ENCODE measurements at regions of chr17 and their contacts with region 1.

Region 1: GRCh38 chr17:69523244-69523861 is 108.9 kb downstream of the MAP2K6 start:
- DNase-seq: peak; percentile 76
- ATAC-seq: peak; percentile 90
- H3K4me3 ChIP-seq: peak overlapping the region; percentile 53
- H3K27ac ChIP-seq: no peak overlapping the region
- H3K4me1 ChIP-seq: 0 out of 2 replicates have a peak, but pooled peaks cover 3% of the 10 kb centered on the region
- H3K27me3 ChIP-seq: no peaks in the 10 kb centered on the region
- CTCF ChIP-seq: peak; percentile 95

Region 2: DNA sequence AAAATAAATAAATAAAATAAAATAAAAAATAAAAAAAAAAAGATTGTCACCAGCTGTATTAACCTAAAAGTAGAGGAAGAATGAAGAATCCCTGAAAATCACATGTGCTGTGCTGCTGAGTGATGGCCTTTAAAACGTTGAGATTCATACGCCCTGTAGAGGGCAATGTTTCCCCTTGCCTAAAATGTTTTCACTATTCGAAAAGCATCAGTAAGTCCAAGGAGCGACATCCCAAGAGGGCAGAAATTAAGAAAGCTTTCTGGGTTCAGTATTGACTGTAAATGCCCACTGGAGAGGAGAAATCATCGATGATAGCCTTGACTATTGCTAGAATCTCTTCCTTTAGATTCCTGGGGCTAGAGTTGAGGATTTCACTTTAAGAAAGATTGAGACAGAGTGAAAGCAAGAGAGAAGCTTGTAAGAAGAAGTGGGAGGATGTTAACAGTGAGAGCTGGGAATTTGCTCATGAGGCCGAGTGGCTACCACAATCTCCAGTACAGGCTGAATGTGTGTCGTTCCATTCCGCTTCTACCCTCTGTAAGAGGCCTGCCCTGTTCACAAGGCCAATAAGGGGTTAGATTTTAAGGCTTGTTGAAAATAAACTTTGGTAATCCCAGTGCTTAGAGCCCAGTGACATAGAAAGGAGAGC is 751.4 kb before region 1 on chr17:
- CTCF ChIA-PET with region 1: interaction called, 4 read pairs
- POLR2A ChIA-PET with region 1: no interaction called
- intact Hi-C with region 1: loop called (anchors 5 kb)
- DNase-seq: peak; percentile 81
- ATAC-seq: peak; percentile 69
- H3K4me3 ChIP-seq: peak overlapping the region; percentile 65
- H3K27ac ChIP-seq: no peak overlapping the region
- H3K4me1 ChIP-seq: peaks cover 13% of the 10 kb centered on the region
- H3K27me3 ChIP-seq: no peaks in the 10 kb centered on the region
- CTCF ChIP-seq: peak; percentile 88

Region 3: GRCh38 chr17:69213059-69213813 is 310.1 kb before region 1 on chr17:
- CTCF ChIA-PET with region 1: no interaction called
- POLR2A ChIA-PET with region 1: no interaction called
- intact Hi-C with region 1: no loop called
- DNase-seq: no peak
- ATAC-seq: no peak
- H3K4me3 ChIP-seq: no peak overlapping the region
- H3K27ac ChIP-seq: no peak overlapping the region
- H3K4me1 ChIP-seq: no peaks in the 10 kb centered on the region
- H3K27me3 ChIP-seq: no peaks in the 10 kb centered on the region
- CTCF ChIP-seq: peak; percentile 40; the same call in 1 of the 2 replicates

Region 4: DNA sequence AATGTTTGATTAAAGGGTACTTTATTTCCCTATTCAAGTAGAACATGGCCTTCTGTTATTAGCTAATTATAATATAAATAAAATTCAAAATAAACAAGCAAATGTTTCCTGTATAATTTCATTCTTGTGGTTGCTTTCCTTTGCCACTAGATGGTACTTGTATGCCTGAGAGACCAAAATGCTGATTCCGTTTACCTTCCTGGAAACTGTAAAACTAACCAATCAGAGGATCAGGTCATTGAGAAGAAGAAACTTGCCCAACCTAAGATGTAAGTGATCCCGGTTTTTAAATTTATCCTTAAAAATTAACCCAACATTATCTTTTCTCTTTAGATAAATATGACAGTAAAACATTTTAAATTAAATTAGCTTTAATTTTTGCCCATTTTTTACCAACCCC is 188.3 kb before region 1 on chr17:
- CTCF ChIA-PET with region 1: interaction called, 10 read pairs
- POLR2A ChIA-PET with region 1: interaction called, 11 read pairs
- intact Hi-C with region 1: loop called (anchors 1 kb)
- DNase-seq: peak; percentile 79
- ATAC-seq: peak; percentile 77
- H3K4me3 ChIP-seq: 0 out of 2 replicates have a peak overlapping the region, but pooled peaks have one; percentile 0
- H3K27ac ChIP-seq: no peak overlapping the region
- H3K4me1 ChIP-seq: no peaks in the 10 kb centered on the region
- H3K27me3 ChIP-seq: no peaks in the 10 kb centered on the region
- CTCF ChIP-seq: peak; percentile 83

Region 5: DNA sequence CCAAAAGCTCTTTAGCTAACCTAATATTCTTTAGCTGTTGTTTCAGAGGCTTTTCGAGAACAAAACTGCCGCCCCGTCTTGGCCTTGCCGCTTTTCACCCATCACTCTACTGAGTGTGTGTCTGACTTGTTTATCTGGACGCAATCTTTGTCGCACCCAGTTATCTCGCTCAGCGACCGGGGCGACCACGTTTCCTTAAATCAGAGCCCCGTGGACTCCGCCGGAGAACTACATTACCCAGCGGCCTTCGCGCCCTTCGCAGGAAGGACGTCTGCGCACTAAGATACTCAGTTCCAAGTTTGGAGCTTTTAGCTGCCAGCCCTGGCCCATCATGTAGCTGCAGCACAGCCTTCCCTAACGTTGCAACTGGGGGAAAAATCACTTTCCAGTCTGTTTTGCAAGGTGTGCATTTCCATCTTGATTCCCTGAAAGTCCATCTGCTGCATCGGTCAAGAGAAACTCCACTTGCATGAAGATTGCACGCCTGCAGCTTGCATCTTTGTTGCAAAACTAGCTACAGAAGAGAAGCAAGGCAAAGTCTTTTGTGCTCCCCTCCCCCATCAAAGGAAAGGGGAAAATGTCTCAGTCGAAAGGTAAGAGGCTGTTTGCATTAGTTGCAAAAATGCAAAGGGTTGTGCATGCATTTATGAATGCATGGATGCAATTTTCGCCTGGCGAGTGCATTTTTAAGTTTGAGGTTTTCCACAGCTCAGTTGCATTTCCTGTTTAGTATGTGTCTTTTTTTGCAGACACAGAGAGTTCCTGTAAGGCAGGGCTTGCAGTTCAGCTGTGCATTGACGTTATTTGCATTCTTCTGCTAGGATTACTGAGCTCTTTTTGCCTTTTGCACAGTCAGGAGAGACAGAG is 108.7 kb before region 1 on chr17 and contains the start of gene MAP2K6:
- CTCF ChIA-PET with region 1: interaction called, 8 read pairs
- POLR2A ChIA-PET with region 1: interaction called, 3 read pairs
- intact Hi-C with region 1: loop called (anchors 2 kb)
- DNase-seq: peak; percentile 90
- ATAC-seq: peak; percentile 92
- H3K4me3 ChIP-seq: peak within 1 kb of the TSS; percentile 72
- H3K27ac ChIP-seq: peak within 1 kb of the TSS; percentile 29
- H3K4me1 ChIP-seq: peaks cover 36% of the 10 kb centered on the region
- H3K27me3 ChIP-seq: no peaks in the 10 kb centered on the region
- CTCF ChIP-seq: no peak
- total RNA-seq, gene MAP2K6: 8.4 and 12.2 TPM in 2 replicates

Region 6: DNA sequence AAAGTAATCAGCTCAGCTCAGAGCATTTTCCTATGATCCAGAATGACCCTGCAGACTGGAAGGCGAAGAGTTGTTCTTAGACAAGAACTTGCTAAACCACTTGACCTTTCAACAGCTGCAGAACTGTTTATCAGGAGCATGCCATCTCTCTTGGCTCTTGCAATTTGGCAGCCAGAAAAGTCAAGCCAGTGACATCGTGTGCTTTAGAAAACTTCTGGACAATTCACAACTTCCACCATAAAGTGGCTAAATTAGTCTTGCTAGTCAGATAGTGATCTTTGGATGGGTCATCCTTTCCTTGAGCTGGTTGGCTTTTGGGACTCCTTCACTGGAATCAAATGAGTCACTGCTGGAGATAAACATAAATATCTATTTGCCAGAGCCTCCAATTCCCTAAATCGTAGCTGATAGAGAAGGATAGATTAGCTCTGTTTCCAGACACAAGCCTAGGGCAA is 37.7 kb after region 1 on chr17:
- CTCF ChIA-PET with region 1: no interaction called
- POLR2A ChIA-PET with region 1: no interaction called
- intact Hi-C with region 1: loop called (anchors 2 kb)
- DNase-seq: peak; percentile 74
- ATAC-seq: peak; percentile 76
- H3K4me3 ChIP-seq: no peak overlapping the region
- H3K27ac ChIP-seq: peak overlapping the region; percentile 67
- H3K4me1 ChIP-seq: peaks cover 30% of the 10 kb centered on the region
- H3K27me3 ChIP-seq: no peaks in the 10 kb centered on the region
- CTCF ChIP-seq: no peak

Region 7: DNA sequence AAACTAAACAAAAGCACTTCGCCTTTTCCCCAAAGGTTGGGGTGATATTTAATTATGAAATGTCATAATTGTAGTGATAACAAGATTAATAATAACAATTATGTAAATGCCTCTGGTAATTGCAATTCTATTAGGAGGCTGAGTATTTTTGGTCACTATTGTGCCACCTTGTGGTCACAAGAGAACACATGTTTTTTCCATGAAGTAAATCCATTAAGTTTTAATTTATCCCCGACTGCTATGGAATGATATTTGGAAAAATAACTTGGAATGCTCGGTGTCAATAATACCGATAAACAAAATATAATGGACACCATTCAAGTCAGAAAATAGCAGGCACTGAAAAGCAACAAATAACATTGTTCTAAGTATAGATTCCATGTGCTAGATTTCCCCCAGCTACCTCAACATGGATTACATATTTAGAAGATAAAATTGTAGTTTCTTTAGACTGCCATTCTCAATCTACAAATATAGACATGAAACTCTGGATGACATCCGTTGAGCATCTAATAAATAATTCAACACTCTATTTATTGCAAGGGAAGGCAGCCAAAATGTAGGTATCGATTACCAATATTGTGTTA is 621.0 kb after region 1 on chr17:
- CTCF ChIA-PET with region 1: interaction called, 3 read pairs
- POLR2A ChIA-PET with region 1: no interaction called
- intact Hi-C with region 1: loop called (anchors 1 kb)
- DNase-seq: peak; percentile 56
- ATAC-seq: no peak; the same call in 1 of the 2 replicates
- H3K4me3 ChIP-seq: no peak overlapping the region
- H3K27ac ChIP-seq: no peak overlapping the region
- H3K4me1 ChIP-seq: peaks cover 7% of the 10 kb centered on the region
- H3K27me3 ChIP-seq: no peaks in the 10 kb centered on the region
- CTCF ChIP-seq: peak; percentile 91

Region 8: GRCh38 chr17:70622368-70623260 is 1099.3 kb after region 1 on chr17:
- CTCF ChIA-PET with region 1: no interaction called
- POLR2A ChIA-PET with region 1: no interaction called
- intact Hi-C with region 1: loop called (anchors 1 kb)
- DNase-seq: peak; percentile 80
- ATAC-seq: peak; percentile 90
- H3K4me3 ChIP-seq: peak overlapping the region; percentile 4; the same call in 1 of the 2 replicates
- H3K27ac ChIP-seq: no peak overlapping the region
- H3K4me1 ChIP-seq: peaks cover 3% of the 10 kb centered on the region; the same call in 1 of the 2 replicates
- H3K27me3 ChIP-seq: no peaks in the 10 kb centered on the region
- CTCF ChIP-seq: peak; percentile 97

Measured in PC-3 (cell line).